ENCODE measurements at regions of chr5 and their contacts with region 1.

Region 1: DNA sequence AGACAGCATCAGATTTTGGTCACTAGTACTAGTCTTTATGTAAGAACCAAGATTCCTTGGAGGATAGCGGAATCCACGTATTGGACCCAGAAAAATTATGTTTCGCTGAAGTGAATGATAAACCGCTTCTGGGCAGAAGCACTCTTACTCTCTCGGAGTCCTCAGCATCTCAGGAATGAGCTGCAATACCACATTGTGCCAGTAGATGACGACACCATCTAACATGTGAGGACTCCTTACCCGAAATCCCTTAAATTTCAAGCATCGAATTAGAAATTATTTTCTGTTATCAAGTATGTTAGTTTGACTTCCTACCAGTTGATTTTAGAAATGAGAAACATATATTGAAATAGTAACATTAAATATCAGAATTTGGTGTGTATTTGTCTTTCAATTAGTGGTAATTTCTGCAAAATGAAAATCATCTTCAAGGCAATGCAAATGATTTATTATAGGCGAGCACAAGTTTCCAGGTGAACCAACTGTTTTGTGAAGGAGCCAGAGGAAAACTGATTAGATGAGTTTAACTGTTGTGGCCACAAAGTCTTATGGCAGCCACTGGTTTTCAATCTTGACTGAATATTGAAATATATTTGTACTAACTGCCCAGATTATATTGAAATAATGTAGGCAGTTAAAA is 66.0 kb upstream of the CAMK4 start:
- DNase-seq: peak; percentile 82
- ATAC-seq: peak; percentile 73
- H3K4me3 ChIP-seq: no peak overlapping the region
- H3K27ac ChIP-seq: no peak overlapping the region
- H3K4me1 ChIP-seq: no peaks in the 10 kb centered on the region
- H3K27me3 ChIP-seq: peaks cover 8% of the 10 kb centered on the region
- CTCF ChIP-seq: peak; percentile 99

Region 2: DNA sequence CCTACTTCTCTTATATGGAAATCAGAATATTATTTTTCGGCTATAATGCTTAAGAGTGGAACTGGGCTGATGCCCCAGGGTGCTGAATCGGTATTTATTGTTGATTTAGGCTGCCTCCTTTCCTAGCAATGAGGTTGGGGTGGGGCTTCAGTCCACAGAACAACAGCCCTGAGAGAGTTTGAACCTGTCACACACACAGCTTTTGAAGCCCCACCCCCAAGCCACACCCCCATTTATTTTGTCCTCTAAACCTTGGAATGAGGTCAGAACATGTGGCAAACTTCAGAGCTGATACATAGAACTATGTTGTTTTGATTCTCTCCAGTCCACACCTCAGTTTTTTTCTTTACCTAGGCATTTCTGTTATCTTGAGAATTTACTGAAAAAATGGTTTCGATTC is 14.3 kb after region 1 on chr5:
- CTCF ChIA-PET with region 1: no interaction called
- POLR2A ChIA-PET with region 1: no interaction called
- in situ Hi-C with region 1: no loop called
- intact Hi-C with region 1: no loop called
- DNase-seq: no peak
- ATAC-seq: no peak
- H3K4me3 ChIP-seq: no peak overlapping the region
- H3K27ac ChIP-seq: no peak overlapping the region
- H3K4me1 ChIP-seq: no peaks in the 10 kb centered on the region
- H3K27me3 ChIP-seq: no peaks in the 10 kb centered on the region
- CTCF ChIP-seq: no peak

Region 3: DNA sequence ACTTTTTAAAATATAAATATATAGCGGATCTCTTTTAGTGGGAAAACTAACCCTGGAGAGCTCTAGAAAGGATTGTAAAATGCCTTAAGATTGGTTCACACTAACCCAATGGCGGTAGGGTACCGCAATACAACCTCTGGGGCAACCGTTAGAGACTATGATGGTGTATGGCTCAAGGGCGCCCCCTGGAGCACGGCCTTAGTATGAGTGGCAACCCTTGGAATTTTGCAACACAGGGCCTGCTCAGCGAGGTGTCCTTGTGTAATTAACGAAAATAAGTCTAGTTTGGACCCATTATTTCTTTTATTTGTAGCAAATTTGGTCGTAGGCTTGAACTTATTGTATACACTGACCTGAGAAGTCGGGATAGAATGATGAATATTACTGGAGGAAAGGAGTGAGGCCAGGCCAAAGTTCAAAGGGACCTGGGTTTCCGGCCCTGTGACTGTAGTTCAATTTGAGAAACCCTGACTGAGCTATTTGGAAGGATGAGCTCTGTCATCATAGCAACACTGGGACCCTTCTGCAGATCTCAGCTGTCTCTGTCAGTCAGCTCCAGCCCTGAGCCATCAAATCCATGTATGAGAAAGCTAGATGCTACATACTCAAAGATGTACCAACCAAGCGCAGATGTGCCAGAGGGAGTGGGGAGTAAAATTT is 120.8 kb after region 1 on chr5:
- CTCF ChIA-PET with region 1: interaction called, 3 read pairs
- POLR2A ChIA-PET with region 1: no interaction called
- in situ Hi-C with region 1: no loop called
- intact Hi-C with region 1: loop called (anchors 2 kb)
- DNase-seq: peak; percentile 32
- ATAC-seq: peak; percentile 94
- H3K4me3 ChIP-seq: no peak overlapping the region
- H3K27ac ChIP-seq: no peak overlapping the region
- H3K4me1 ChIP-seq: no peaks in the 10 kb centered on the region
- H3K27me3 ChIP-seq: no peaks in the 10 kb centered on the region
- CTCF ChIP-seq: peak; percentile 91

Region 4: GRCh38 chr5:111422245-111422644 is 264.0 kb after region 1 on chr5:
- CTCF ChIA-PET with region 1: no interaction called
- POLR2A ChIA-PET with region 1: no interaction called
- in situ Hi-C with region 1: no loop called
- intact Hi-C with region 1: no loop called
- DNase-seq: no peak
- ATAC-seq: no peak
- H3K4me3 ChIP-seq: no peak overlapping the region
- H3K27ac ChIP-seq: no peak overlapping the region
- H3K4me1 ChIP-seq: no peaks in the 10 kb centered on the region
- H3K27me3 ChIP-seq: no peaks in the 10 kb centered on the region
- CTCF ChIP-seq: no peak

Region 5: GRCh38 chr5:111472579-111472978 is 314.4 kb after region 1 on chr5:
- CTCF ChIA-PET with region 1: no interaction called
- POLR2A ChIA-PET with region 1: no interaction called
- in situ Hi-C with region 1: no loop called
- intact Hi-C with region 1: loop called (anchors 10 kb)
- DNase-seq: no peak
- ATAC-seq: no peak
- H3K4me3 ChIP-seq: no peak overlapping the region
- H3K27ac ChIP-seq: no peak overlapping the region
- H3K4me1 ChIP-seq: no peaks in the 10 kb centered on the region
- H3K27me3 ChIP-seq: no peaks in the 10 kb centered on the region
- CTCF ChIP-seq: no peak

Measured in Panc1 (cell line).